Heart right ventricle (tissue), 16 donors: ENCODE measurements at regions of chr6 and their contacts with region 1.

Region 1: DNA sequence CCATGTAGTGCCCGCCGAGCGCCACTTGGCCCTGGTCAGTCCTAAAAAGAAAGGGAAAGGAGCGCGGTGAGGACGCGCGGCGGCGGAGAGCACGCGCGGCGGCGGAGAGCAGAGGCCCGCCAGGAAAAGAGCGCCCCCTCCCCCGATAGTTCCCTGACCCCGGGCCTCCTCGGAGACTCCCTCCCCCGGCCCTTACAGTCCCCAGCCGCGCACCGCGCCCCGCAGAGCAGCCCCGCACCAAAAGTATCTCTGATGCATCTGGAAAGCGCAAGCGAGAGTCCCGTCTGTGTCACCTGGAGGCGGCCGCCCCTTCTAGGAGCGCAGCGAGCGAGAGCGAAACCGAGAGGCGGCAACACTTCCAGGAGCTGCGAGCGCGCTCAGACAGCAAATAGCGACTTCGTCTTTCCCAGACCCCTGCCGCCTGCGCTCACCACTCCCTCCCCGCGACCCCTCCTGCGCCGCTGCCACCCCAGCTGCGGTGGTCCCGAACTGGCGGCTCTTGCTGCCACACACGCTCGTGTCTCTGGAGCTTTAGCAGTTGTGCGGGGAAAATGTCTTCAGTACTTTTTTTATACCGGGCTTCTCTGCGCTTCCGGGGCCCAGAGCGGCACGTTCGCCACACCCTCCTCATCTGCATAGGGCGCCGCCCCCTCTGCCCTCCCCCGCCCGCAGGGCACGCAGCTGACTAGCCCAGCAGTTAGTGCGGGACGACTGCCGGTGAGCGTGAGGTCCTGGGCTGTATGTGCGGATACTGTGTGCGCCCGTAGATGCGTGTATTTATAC is at the start of gene TENT5A:
- DNase-seq: peak; percentile 91 to 93
- ATAC-seq: peak; percentile 84 to 93 (median 88)
- H3K4me3 ChIP-seq: peak within 1 kb of the TSS; percentile 73 to 96 (median 82)
- H3K27ac ChIP-seq: peak within 1 kb of the TSS; percentile 87 to 99 (median 96)
- H3K4me1 ChIP-seq: peaks cover 1 to 45% (median 20%) of the 10 kb centered on the region in 9 donors
- H3K27me3 ChIP-seq: no peaks in the 10 kb centered on the region
- CTCF ChIP-seq: peak in 4 of 9 donors; percentile 13 to 33 (median 28)
- total RNA-seq, gene TENT5A: 37.0 to 72.1 (median 46.9) TPM

Region 2: GRCh38 chr6:80742481-80742880 is 1009.8 kb before region 1 on chr6:
- intact Hi-C with region 1: loop called in 1 of 10 experiments (anchors 10 kb)
- DNase-seq: no peak
- ATAC-seq: peak in 2 of 8 donors; percentile 35 to 49
- H3K4me3 ChIP-seq: no peak overlapping the region
- H3K27ac ChIP-seq: no peak overlapping the region
- H3K4me1 ChIP-seq: no peaks in the 10 kb centered on the region
- H3K27me3 ChIP-seq: no peaks in the 10 kb centered on the region
- CTCF ChIP-seq: peak in 7 of 9 donors; percentile 16 to 55 (median 45)

Region 3: GRCh38 chr6:81515562-81516453 is 236.5 kb before region 1 on chr6:
- intact Hi-C with region 1: loop called in 2 of 10 experiments (anchors 2 to 5 kb)
- DNase-seq: no peak
- ATAC-seq: peak in 7 of 8 donors; percentile 29 to 86 (median 73)
- H3K4me3 ChIP-seq: peak overlapping the region in 1 of 10 donors; percentile 10
- H3K27ac ChIP-seq: peak overlapping the region in 3 of 10 donors; percentile 13 to 35 (median 20)
- H3K4me1 ChIP-seq: peaks cover 0 to 10% (median 0%) of the 10 kb centered on the region in 9 donors
- H3K27me3 ChIP-seq: no peaks in the 10 kb centered on the region
- CTCF ChIP-seq: no peak

Region 4: DNA sequence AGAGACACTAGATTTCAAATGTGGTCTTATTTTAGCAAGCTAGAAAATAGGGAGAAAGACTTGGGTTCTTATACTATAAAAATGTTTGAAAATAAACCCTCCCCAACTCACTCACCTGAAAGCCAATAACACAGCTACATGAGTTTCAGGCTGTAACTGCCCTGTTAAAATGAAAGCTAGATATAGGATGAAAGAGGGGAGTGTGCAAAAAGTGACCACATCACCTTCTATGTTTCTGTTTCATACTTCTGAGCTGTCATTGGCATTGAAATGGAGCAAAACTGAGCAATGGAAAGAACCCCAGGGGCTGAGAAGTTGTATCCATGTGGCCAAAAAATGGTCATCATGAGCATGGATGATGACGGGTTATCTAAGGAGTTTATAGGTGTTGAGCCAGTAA is 148.3 kb after region 1 on chr6:
- intact Hi-C with region 1: loop called in 5 of 10 experiments (anchors 2 to 10 kb)
- DNase-seq: no peak
- ATAC-seq: no peak
- H3K4me3 ChIP-seq: no peak overlapping the region
- H3K27ac ChIP-seq: peak overlapping the region in 9 of 10 donors; percentile 4 to 85 (median 59)
- H3K4me1 ChIP-seq: peaks cover 3 to 51% (median 15%) of the 10 kb centered on the region in 9 donors
- H3K27me3 ChIP-seq: no peaks in the 10 kb centered on the region
- CTCF ChIP-seq: no peak

Region 5: GRCh38 chr6:82017288-82017687 is 265.0 kb after region 1 on chr6:
- intact Hi-C with region 1: loop called in 1 of 10 experiments (anchors 10 kb)
- DNase-seq: peak in 1 of 2 donors; percentile 37
- ATAC-seq: peak; percentile 58 to 94 (median 76)
- H3K4me3 ChIP-seq: no peak overlapping the region
- H3K27ac ChIP-seq: peak overlapping the region in 9 of 10 donors; percentile 30 to 76 (median 64)
- H3K4me1 ChIP-seq: peaks cover 5 to 56% (median 39%) of the 10 kb centered on the region in 9 donors
- H3K27me3 ChIP-seq: no peaks in the 10 kb centered on the region
- CTCF ChIP-seq: no peak

Region 6: DNA sequence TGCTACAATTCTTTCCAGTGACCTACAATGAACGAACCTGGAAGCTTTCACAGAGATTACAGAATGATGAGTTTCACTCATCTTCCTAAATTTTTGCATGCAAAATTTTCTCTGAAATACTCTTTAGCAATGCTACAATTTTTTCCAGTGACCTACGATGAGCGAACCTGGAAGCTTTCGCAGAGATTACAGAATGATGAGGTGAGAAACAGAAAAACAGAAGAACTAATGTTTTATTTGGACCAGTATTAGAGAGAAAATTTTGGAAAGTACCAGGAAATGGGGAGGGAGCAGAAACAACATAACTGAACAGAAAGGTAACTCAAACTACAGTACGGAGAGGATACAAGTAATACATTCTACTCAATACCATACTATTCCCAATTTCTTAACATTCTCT is 420.3 kb after region 1 on chr6:
- intact Hi-C with region 1: loop called in 6 of 10 experiments (anchors 5 to 10 kb)
- DNase-seq: no peak
- ATAC-seq: no peak
- H3K4me3 ChIP-seq: no peak overlapping the region
- H3K27ac ChIP-seq: no peak overlapping the region
- H3K4me1 ChIP-seq: peaks cover 0 to 27% (median 5%) of the 10 kb centered on the region in 9 donors
- H3K27me3 ChIP-seq: no peaks in the 10 kb centered on the region
- CTCF ChIP-seq: no peak